MCF 10A (cell line): ENCODE measurements at regions of chr16 and their contacts with region 1.

Region 1: GRCh38 chr16:24906199-24907020 is 60.6 kb downstream of the SLC5A11 start:
- DNase-seq: peak; percentile 26
- H3K4me3 Mint-ChIP-seq: no peak overlapping the region
- H3K27ac Mint-ChIP-seq: no peak overlapping the region
- H3K4me1 Mint-ChIP-seq: no peaks in the 10 kb centered on the region
- H3K27me3 Mint-ChIP-seq: peaks cover 22% of the 10 kb centered on the region
- CTCF ChIP-seq: peak; percentile 49

Region 2: GRCh38 chr16:24929409-24929808 is 23.0 kb after region 1 on chr16:
- CTCF ChIA-PET with region 1: interaction called, 12 read pairs
- POLR2A ChIA-PET with region 1: no interaction called
- intact Hi-C with region 1: no loop called
- DNase-seq: no peak
- H3K4me3 Mint-ChIP-seq: no peak overlapping the region
- H3K27ac Mint-ChIP-seq: no peak overlapping the region
- H3K4me1 Mint-ChIP-seq: no peaks in the 10 kb centered on the region
- H3K27me3 Mint-ChIP-seq: no peaks in the 10 kb centered on the region
- CTCF ChIP-seq: no peak

Region 3: DNA sequence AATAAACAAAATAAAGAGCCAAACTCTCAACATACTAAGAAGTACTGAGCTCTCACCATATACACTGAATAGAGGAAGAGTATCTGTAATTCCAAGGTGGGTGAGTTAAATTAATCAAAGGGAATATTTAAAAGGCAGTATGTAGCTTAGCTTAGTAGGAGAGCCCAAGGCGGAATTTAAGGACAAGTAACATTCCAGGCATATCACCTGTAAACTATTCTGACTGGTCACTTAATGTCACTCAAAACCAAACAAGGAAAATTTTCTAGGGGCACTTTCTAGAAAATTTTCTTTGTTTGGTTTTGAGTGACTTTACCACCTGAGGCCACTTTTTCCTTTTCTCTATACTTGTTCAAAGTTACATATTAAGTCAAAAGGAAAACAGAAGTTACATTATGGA is 42.1 kb after region 1 on chr16:
- CTCF ChIA-PET with region 1: interaction called, 13 read pairs
- POLR2A ChIA-PET with region 1: interaction called, 3 read pairs
- intact Hi-C with region 1: no loop called
- DNase-seq: no peak
- H3K4me3 Mint-ChIP-seq: no peak overlapping the region
- H3K27ac Mint-ChIP-seq: no peak overlapping the region
- H3K4me1 Mint-ChIP-seq: no peaks in the 10 kb centered on the region
- H3K27me3 Mint-ChIP-seq: no peaks in the 10 kb centered on the region
- CTCF ChIP-seq: no peak

Region 4: DNA sequence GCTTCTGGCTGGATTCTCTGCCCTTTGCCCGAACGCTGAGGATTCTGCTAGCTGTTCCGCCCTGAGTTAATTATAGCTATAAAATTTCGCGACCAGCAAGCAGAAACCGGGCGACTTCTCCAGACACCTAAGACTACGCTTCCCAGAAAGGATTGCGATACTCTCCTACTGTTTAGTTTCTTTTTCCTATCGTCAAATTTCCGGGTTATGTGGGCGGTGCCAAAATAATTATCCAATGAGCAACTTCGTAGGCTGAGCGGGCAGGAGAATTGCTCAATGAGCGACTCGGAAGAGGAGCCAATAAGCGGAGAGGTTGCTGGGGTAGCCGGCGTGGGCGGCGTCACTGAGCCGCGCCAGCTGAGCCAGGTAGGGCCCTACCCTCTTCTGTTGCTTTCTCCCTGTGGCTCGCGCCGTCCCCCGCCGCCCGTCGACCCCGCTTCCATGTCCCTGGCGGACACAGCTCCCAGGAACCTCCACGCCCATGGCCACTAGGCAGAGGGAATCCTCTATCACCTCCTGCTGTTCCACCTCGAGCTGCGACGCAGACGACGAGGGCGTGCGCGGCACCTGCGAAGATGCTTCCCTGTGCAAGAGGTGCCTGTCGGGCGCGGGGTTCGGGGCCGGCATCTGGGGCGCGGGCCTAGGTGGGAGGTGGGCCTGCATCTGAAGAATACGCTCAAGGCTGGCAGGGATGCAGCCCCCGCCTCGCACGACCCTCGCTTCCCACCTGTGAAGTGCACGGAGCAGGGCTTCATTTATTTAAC is 205.2 kb after region 1 on chr16 and contains the start of gene LCMT1:
- CTCF ChIA-PET with region 1: interaction called, 11 read pairs
- POLR2A ChIA-PET with region 1: interaction called, 3 read pairs
- intact Hi-C with region 1: no loop called
- DNase-seq: peak; percentile 98
- H3K4me3 Mint-ChIP-seq: peak within 1 kb of the TSS; percentile 93
- H3K27ac Mint-ChIP-seq: peak within 1 kb of the TSS; percentile 92
- H3K4me1 Mint-ChIP-seq: peaks cover 41% of the 10 kb centered on the region
- H3K27me3 Mint-ChIP-seq: no peaks in the 10 kb centered on the region
- CTCF ChIP-seq: no peak
- total RNA-seq, gene LCMT1: 28.1 and 36.3 TPM in 2 replicates